ENCODE measurements at regions of chr6 and their contacts with region 1.

Region 1: DNA sequence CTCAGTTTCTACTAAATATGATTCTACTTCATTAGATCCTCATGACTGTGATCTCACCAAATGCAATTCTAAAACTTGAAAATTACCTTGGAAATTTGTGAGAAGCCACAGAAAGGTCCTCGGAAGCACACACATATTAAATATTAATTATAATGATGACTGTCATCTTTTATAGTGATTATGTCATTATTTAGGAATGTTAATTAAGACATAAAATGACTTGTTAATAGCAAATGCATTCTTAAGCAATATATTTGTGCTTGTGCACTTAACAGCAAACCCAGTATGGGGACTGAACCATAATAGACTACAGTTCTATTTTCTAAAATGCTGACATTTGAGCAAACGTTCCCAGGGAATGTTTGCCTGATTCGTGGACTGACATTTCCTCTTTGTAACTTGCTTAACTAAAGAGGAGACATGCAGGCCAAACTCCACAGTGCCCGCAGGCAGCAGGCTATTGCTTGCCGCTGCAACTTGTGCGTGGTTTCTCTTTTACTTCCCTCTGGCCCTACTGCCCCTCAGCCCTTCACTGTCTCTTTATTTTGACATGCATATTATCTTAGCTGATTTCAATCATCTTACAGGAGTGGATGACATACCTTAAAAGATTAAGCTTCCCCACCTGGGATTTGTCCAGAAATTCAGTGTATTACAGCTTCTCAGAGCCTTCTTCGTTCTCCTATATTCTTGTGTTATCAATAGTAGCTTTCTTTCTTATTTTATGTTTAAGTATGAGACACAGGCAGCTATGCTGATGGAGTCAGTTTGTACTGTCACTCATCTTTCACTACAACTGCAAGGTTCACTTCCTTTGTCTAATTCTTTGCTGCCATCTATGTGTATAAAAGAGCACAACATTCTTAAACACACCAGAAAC is 141.5 kb downstream of the GMDS start:
- DNase-seq: peak in 2 of 4 donors; percentile 18 to 26
- ATAC-seq: peak; percentile 82
- H3K4me3 ChIP-seq: no peak overlapping the region
- H3K27ac ChIP-seq: peak overlapping the region in 2 of 4 donors; percentile 6 to 35
- H3K4me1 ChIP-seq: peaks cover 18% of the 10 kb centered on the region
- H3K27me3 ChIP-seq: no peaks in the 10 kb centered on the region
- CTCF ChIP-seq: peak in 6 of 7 experiments; percentile 24 to 84 (median 78)
- POLR2A ChIP-seq: no peak

Region 2: GRCh38 chr6:1609648-1610496 is 494.0 kb before region 1 on chr6 and contains the start of gene FOXC1:
- intact Hi-C with region 1: loop called (anchors 5 kb)
- DNase-seq: peak; percentile 89 to 92 (median 90)
- ATAC-seq: peak; percentile 83
- H3K4me3 ChIP-seq: peak within 1 kb of the TSS; percentile 18 to 29
- H3K27ac ChIP-seq: peak within 1 kb of the TSS; percentile 54 to 92 (median 84)
- H3K4me1 ChIP-seq: peaks cover 73% of the 10 kb centered on the region
- H3K27me3 ChIP-seq: peaks cover 0 to 56% of the 10 kb centered on the region in 2 donors
- CTCF ChIP-seq: no peak
- POLR2A ChIP-seq: peak; percentile 54 to 80 (median 75)
- total RNA-seq, gene FOXC1: 2.0 to 3.6 TPM

Region 3: DNA sequence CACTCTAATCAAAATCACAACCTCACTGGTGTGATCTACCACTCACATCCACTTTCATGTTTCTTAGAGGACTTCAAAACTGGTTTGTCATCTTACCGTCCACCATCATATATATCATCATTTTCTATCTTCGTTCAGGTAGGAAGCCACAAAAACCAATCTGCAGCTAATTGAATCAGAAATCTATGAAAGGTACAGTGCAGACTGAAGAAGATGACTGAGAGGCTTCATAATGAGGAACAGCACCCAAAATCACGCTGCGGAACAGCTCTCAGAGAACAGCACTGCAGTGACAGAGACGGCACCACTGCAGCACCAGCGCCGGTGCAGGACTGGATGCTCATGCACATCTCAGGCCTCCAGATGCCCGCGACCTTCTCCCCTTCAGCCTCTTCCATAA is 128.6 kb after region 1 on chr6:
- intact Hi-C with region 1: no loop called
- DNase-seq: no peak
- ATAC-seq: no peak
- H3K4me3 ChIP-seq: no peak overlapping the region
- H3K27ac ChIP-seq: no peak overlapping the region
- H3K4me1 ChIP-seq: peaks cover 9% of the 10 kb centered on the region
- H3K27me3 ChIP-seq: no peaks in the 10 kb centered on the region
- CTCF ChIP-seq: no peak
- POLR2A ChIP-seq: no peak